IMR-90 (cell line): ENCODE measurements at regions of chr1 and their contacts with region 1.

Region 1: GRCh38 chr1:1059494-1060280 is 14.4 kb downstream of the RNF223 start:
- DNase-seq: peak; percentile 53
- ATAC-seq: peak; percentile 91
- H3K4me3 ChIP-seq: peak overlapping the region; percentile 83
- H3K27ac ChIP-seq: no peak overlapping the region; the same call in 1 of the 2 replicates
- H3K4me1 ChIP-seq: peaks cover 13% of the 10 kb centered on the region
- H3K27me3 ChIP-seq: peaks cover 4% of the 10 kb centered on the region; the same call in 1 of the 2 replicates
- CTCF ChIP-seq: no peak
- POLR2A ChIP-seq: peak; percentile 48; the same call in 1 of the 2 replicates
- RAD21 ChIP-seq: no peak

Region 2: DNA sequence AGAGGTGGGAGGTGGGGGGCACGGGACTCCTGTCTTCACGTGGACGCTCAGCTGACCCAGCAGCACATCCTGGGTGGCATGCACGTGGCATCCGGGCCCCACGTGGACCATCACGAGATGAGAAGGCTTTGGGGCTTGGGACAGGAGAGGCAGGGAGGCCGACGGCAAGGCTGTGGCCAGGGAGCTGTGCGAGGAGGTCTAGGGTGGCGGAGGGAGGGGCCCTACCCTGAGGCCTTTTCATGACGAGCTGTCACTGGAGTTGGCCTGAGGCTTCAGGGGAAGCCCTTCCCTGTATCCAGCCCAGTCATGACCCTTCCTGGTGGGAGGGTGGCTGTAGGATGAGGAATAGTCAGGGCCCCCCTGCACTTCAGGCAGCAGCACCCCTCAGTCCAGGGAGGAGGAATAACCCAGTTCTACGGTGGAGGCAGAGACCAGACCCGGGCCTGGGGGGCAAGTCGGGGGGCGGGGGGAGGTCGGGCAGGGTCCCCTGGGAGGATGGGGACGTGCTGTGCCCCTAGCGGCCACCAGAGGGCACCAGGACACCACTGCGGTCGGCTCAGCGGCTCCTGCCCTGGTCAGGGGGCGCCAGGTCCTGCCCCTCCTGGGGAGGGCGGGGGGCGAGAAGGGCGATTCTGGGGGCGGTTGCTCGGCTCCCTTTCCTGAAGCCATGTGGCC is 75.8 kb before region 1 on chr1:
- CTCF ChIA-PET with region 1: interaction called, 9 read pairs
- POLR2A ChIA-PET with region 1: no interaction called
- dilution Hi-C with region 1: no loop called
- in situ Hi-C with region 1: no loop called
- intact Hi-C with region 1: loop called (anchors 1 kb)
- DNase-seq: no peak
- ATAC-seq: peak; percentile 97
- H3K4me3 ChIP-seq: no peak overlapping the region
- H3K27ac ChIP-seq: no peak overlapping the region
- H3K4me1 ChIP-seq: no peaks in the 10 kb centered on the region
- H3K27me3 ChIP-seq: peaks cover 5% of the 10 kb centered on the region; the same call in 1 of the 2 replicates
- CTCF ChIP-seq: peak; percentile 67
- POLR2A ChIP-seq: peak; percentile 37; the same call in 1 of the 2 replicates
- RAD21 ChIP-seq: peak; percentile 71

Region 3: DNA sequence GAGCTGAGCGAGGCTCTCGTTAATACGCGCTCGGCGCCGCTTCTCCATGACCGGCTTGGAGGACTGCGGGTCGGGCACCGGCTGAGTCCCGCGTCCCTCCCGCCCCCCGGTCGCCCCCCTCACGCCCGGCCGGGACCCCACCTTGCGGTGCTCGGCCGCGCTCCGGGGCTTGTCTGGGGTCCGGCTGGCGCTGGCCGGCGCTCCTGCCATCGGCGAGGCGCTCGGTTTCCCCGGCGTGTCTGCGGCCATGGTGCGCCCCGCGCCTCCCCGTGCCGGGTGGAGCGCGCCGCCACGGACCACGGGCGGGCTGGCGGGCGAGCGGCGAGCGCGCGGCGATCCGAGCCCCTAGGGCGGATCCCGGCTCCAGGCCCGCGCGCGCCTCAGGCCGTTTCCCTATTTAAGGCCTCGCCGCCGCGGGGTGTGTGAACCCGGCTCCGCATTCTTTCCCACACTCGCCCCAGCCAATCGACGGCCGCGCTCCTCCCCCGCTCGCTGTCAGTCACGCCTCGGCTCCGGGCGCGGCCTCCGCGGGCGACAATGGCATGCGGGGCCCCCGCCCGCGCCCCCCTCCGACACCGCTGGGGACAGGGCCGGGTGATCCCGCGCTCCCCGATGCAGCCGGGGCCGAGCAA is 59.8 kb before region 1 on chr1 and contains the start of gene HES4:
- CTCF ChIA-PET with region 1: no interaction called
- POLR2A ChIA-PET with region 1: no interaction called
- dilution Hi-C with region 1: no loop called
- in situ Hi-C with region 1: no loop called
- intact Hi-C with region 1: loop called (anchors 5 kb)
- DNase-seq: peak; percentile 90
- ATAC-seq: peak; percentile 81
- H3K4me3 ChIP-seq: peak within 1 kb of the TSS; percentile 59
- H3K27ac ChIP-seq: peak within 1 kb of the TSS; percentile 84
- H3K4me1 ChIP-seq: peaks cover 4% of the 10 kb centered on the region
- H3K27me3 ChIP-seq: no peaks in the 10 kb centered on the region
- CTCF ChIP-seq: no peak
- POLR2A ChIP-seq: peak; percentile 99
- RAD21 ChIP-seq: no peak
- total RNA-seq, gene HES4: 1.4 and 3.1 TPM in 2 replicates

Region 4: DNA sequence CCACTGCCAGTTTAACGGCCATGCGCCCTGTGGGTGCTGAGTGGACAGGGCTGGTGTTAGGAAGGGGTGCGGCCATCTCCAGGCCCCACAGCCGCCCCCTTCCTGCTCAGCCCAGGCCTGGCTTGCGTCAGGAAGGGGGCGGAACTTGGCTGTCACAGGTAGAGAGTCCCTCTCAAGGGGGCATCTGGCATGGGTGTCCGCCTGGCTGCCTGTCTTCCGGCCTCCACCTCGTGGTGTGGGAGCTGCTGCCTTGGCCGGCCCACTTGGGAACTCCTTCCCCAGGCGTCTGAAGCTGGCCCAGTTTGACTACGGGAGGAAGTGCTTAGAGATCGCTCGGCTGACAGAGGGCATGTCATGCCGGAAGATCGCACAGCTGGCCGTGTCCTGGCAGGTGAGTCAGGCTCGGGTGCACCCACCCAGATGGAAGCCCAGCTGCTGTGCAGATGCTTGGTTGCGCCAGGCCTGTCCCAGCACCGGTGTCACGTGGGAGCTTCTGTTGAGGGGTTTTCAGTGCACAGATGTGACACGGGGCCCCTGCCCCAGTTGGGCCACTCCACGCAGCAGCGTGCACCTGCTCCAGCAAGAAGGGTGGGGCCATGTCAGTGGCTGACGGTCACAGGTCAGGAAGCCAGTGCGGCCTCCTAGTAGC is 402.8 kb after region 1 on chr1:
- CTCF ChIA-PET with region 1: no interaction called
- POLR2A ChIA-PET with region 1: no interaction called
- dilution Hi-C with region 1: no loop called
- in situ Hi-C with region 1: no loop called
- intact Hi-C with region 1: no loop called
- DNase-seq: no peak
- ATAC-seq: no peak
- H3K4me3 ChIP-seq: no peak overlapping the region
- H3K27ac ChIP-seq: no peak overlapping the region
- H3K4me1 ChIP-seq: no peaks in the 10 kb centered on the region
- H3K27me3 ChIP-seq: no peaks in the 10 kb centered on the region
- CTCF ChIP-seq: no peak
- POLR2A ChIP-seq: no peak
- RAD21 ChIP-seq: no peak

Region 5: GRCh38 chr1:2019172-2019543 is 959.5 kb after region 1 on chr1 and contains the start of gene GABRD:
- CTCF ChIA-PET with region 1: no interaction called
- POLR2A ChIA-PET with region 1: no interaction called
- dilution Hi-C with region 1: no loop called
- in situ Hi-C with region 1: no loop called
- intact Hi-C with region 1: no loop called
- DNase-seq: no peak
- ATAC-seq: peak; percentile 84
- H3K4me3 ChIP-seq: no peak within 1 kb of the TSS
- H3K27ac ChIP-seq: no peak within 1 kb of the TSS
- H3K4me1 ChIP-seq: no peaks in the 10 kb centered on the region
- H3K27me3 ChIP-seq: peaks cover 81% of the 10 kb centered on the region
- CTCF ChIP-seq: no peak
- POLR2A ChIP-seq: no peak
- RAD21 ChIP-seq: no peak
- total RNA-seq, gene GABRD: not detected in 2 replicates